ENCODE measurements at regions of chr15 and their contacts with region 1.

Region 1: GRCh38 chr15:50134520-50135024 is 15.5 kb upstream of the ATP8B4 start:
- DNase-seq: peak; percentile 67
- H3K4me3 Mint-ChIP-seq: peak overlapping the region; percentile 63
- H3K27ac Mint-ChIP-seq: peak overlapping the region; percentile 95
- H3K4me1 Mint-ChIP-seq: peaks cover 52% of the 10 kb centered on the region
- H3K27me3 Mint-ChIP-seq: peaks cover 2% of the 10 kb centered on the region

Region 2: GRCh38 chr15:48888836-48889235 is 1245.7 kb before region 1 on chr15:
- intact Hi-C with region 1: loop called (anchors 10 kb)
- DNase-seq: no peak
- H3K4me3 Mint-ChIP-seq: no peak overlapping the region
- H3K27ac Mint-ChIP-seq: peak overlapping the region; percentile 3
- H3K4me1 Mint-ChIP-seq: peaks cover 21% of the 10 kb centered on the region
- H3K27me3 Mint-ChIP-seq: peaks cover 2% of the 10 kb centered on the region

Region 3: GRCh38 chr15:49155110-49155833 is 979.3 kb before region 1 on chr15 and contains the start of gene COPS2:
- intact Hi-C with region 1: loop called (anchors 5 kb)
- DNase-seq: peak; percentile 98
- H3K4me3 Mint-ChIP-seq: peak within 1 kb of the TSS; percentile 99
- H3K27ac Mint-ChIP-seq: peak within 1 kb of the TSS; percentile 99
- H3K4me1 Mint-ChIP-seq: peaks cover 40% of the 10 kb centered on the region
- H3K27me3 Mint-ChIP-seq: peaks cover 1% of the 10 kb centered on the region
- total RNA-seq, gene COPS2: 98.6 and 99.0 TPM in 2 replicates

Region 4: DNA sequence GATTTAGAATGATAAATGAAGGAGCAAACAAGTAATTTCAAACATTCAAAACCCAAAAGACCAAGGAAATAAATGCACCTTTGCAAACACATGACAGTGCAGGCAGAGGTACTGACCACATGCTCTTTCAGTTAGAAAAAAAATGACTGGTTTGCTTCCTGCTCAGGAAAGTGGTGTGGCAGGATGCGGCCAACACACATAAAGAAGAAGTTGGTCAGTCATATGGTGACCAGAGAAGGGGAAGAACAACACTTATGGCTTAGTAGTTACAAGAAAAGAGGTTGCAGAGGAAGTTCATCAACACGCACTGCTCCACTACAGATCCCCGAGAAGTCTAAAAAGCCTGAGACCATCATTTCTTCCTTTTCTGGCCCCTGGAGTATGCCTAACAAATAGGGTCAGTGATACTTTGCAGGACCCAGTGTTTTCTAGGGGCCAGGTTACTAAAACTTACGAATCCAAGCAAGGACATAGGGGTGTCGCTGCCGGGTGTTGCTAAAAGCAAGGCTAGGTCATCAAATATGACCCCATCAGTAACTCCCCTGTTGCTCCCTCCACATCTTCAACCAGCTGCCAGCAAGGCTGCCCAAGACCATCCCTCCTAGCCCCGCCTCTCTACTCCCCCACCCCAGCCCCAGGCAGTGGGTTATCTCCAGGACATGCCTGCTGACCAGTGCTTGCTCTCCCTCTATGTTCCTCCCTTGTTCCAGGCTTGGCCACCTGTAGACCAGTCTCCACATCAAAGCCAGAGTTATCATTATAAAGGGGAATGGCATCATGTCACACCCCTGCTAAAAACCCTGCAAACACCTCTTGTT is 26.8 kb before region 1 on chr15:
- intact Hi-C with region 1: loop called (anchors 1 kb)
- DNase-seq: peak; percentile 82
- H3K4me3 Mint-ChIP-seq: peak overlapping the region; percentile 79
- H3K27ac Mint-ChIP-seq: peak overlapping the region; percentile 91
- H3K4me1 Mint-ChIP-seq: peaks cover 67% of the 10 kb centered on the region
- H3K27me3 Mint-ChIP-seq: no peaks in the 10 kb centered on the region

Region 5: GRCh38 chr15:50247819-50248655 is 113.5 kb after region 1 on chr15:
- intact Hi-C with region 1: loop called (anchors 5 kb)
- DNase-seq: peak; percentile 91
- H3K4me3 Mint-ChIP-seq: peak overlapping the region; percentile 81
- H3K27ac Mint-ChIP-seq: peak overlapping the region; percentile 99
- H3K4me1 Mint-ChIP-seq: peaks cover 53% of the 10 kb centered on the region
- H3K27me3 Mint-ChIP-seq: no peaks in the 10 kb centered on the region

Region 6: DNA sequence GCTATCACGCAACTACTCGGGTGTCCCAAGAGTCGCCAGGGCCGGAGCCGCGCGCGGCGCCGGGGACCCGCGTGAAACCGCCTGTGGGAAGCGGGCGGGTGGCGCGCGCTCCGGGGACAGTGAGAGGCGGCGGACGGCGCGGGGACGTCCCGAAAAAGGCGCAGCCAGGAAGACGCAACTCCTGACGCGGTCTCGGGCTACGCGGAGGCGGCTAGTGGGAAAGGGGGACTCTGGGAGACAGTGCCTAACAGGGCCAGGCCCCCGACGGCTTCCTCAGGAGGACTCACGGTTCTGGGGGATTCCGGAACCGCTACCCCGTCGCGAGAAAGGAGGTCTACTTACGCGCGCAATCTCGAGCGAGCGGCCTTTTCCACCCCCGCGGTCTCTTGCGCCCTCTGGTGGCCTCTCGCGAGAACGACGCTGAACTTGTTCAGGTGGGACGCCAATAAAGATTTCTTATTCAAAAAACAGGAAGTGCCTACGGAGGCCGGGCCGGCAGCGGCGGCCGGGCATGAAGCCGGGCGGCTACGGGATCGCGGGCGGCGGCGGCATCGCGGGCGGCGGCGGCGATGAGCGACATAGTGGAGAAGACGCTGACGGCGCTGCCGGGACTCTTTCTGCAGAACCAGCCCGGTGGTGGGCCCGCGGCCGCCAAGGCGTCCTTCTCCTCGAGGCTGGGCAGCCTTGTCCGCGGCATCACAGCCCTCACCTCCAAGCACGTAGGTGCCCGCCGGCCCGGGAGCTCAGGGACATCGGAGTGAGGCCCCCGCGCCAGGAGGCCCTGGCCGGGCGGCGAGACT is 773.8 kb after region 1 on chr15 and contains the start of gene AP4E1:
- intact Hi-C with region 1: loop called (anchors 1 kb)
- DNase-seq: peak; percentile 98
- H3K4me3 Mint-ChIP-seq: peak within 1 kb of the TSS; percentile 87
- H3K27ac Mint-ChIP-seq: peak within 1 kb of the TSS; percentile 97
- H3K4me1 Mint-ChIP-seq: peaks cover 16% of the 10 kb centered on the region
- H3K27me3 Mint-ChIP-seq: no peaks in the 10 kb centered on the region
- total RNA-seq, gene AP4E1: 16.5 TPM in 2 replicates

Measured in activated CD4-positive, alpha-beta T cell treated with anti-CD3 and anti-CD28 coated beads, Interleukin-2, amount 10 ng/mL, durations not matched to agents 24 days and 14 days (primary cell).